K562 (cell line): ENCODE measurements at regions of chr2 and their contacts with region 1.

Region 1: DNA sequence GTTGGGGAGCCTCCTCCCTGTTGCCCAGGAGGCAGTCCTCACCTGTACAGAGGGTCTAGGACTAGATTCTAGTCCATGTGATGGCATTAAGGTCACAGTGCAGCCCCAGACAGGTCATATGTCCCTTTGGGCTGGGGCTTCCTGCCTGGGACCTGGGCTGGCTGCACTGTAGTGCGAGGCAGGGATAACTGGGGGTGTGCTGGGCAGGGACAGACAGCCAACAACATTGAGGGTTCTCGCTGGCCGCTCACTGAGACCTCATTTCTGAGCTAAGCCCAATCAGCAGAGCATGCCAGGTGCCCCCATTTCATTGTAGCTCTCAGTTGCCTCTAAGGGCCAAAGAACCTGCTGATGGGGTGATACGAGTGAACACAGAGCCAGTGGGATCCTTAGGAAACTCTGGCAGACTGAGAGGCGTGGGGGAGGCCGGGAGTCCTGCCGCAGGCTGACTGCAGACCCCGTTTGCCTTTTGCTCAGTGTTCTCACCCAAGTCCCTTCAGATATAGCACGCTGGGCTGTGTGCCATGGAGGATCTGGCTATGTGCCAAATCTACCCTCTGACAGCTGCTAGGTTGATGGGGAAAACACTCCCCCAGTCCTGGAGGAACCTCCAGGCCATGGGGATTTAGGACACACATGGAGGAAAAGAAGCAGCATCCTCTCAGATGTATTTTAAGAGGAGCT is 51.9 kb downstream of the DYSF start:
- DNase-seq: peak in 2 of 4 experiments; percentile 12 to 29
- ATAC-seq: peak; percentile 11; the same call in 1 of the 3 replicates
- H3K4me3 ChIP-seq: no peak overlapping the region
- H3K27ac ChIP-seq: no peak overlapping the region
- H3K4me1 ChIP-seq: no peaks in the 10 kb centered on the region; a peak in 1 of 5 replicates
- H3K27me3 ChIP-seq: peaks cover 0 to 20% of the 10 kb centered on the region in 2 experiments; a peak in 2 of 5 replicates
- CTCF ChIP-seq: no peak
- EP300 ChIP-seq: no peak
- POLR2A ChIP-seq: no peak
- RAD21 ChIP-seq: no peak

Region 2: GRCh38 chr2:71299507-71299906 is 205.7 kb before region 1 on chr2:
- CTCF ChIA-PET with region 1: interaction called, 71 read pairs
- POLR2A ChIA-PET with region 1: interaction called, 4 read pairs
- in situ Hi-C with region 1: loop called (anchors 5 kb)
- intact Hi-C with region 1: loop called (anchors 1 kb)
- DNase-seq: peak; percentile 33 to 51 (median 44)
- ATAC-seq: peak; percentile 53; the same call in 2 of the 3 replicates
- H3K4me3 ChIP-seq: no peak overlapping the region
- H3K27ac ChIP-seq: no peak overlapping the region
- H3K4me1 ChIP-seq: no peaks in the 10 kb centered on the region
- H3K27me3 ChIP-seq: peaks cover 7 to 12% of the 10 kb centered on the region in 2 experiments; a peak in 4 of 5 replicates
- CTCF ChIP-seq: peak; percentile 51 to 84 (median 52); a peak in 5 of 6 replicates
- EP300 ChIP-seq: no peak
- POLR2A ChIP-seq: no peak
- RAD21 ChIP-seq: peak; percentile 65 to 80

Region 3: GRCh38 chr2:71530641-71531332 is 25.6 kb after region 1 on chr2:
- CTCF ChIA-PET with region 1: no interaction called
- POLR2A ChIA-PET with region 1: no interaction called
- in situ Hi-C with region 1: no loop called
- intact Hi-C with region 1: no loop called
- DNase-seq: peak; percentile 59 to 80 (median 76)
- ATAC-seq: peak; percentile 96
- H3K4me3 ChIP-seq: no peak overlapping the region
- H3K27ac ChIP-seq: no peak overlapping the region
- H3K4me1 ChIP-seq: no peaks in the 10 kb centered on the region; a peak in 1 of 5 replicates
- H3K27me3 ChIP-seq: peaks cover 11 to 32% of the 10 kb centered on the region in 2 experiments; a peak in 4 of 5 replicates
- CTCF ChIP-seq: peak; percentile 72 to 80 (median 72)
- EP300 ChIP-seq: no peak
- POLR2A ChIP-seq: no peak
- RAD21 ChIP-seq: peak; percentile 59 to 77